ENCODE measurements at regions of chr15 and their contacts with region 1.

Region 1: GRCh38 chr15:51281368-51281967 is 56.9 kb downstream of the CYP19A1 start:
- DNase-seq: peak; percentile 78

Region 2: GRCh38 chr15:51229907-51230330 is 51.5 kb before region 1 on chr15:
- intact Hi-C with region 1: loop called (anchors 5 kb)
- DNase-seq: no peak

Region 3: GRCh38 chr15:51366960-51367648 is 85.6 kb after region 1 on chr15:
- intact Hi-C with region 1: no loop called
- DNase-seq: no peak

Region 4: DNA sequence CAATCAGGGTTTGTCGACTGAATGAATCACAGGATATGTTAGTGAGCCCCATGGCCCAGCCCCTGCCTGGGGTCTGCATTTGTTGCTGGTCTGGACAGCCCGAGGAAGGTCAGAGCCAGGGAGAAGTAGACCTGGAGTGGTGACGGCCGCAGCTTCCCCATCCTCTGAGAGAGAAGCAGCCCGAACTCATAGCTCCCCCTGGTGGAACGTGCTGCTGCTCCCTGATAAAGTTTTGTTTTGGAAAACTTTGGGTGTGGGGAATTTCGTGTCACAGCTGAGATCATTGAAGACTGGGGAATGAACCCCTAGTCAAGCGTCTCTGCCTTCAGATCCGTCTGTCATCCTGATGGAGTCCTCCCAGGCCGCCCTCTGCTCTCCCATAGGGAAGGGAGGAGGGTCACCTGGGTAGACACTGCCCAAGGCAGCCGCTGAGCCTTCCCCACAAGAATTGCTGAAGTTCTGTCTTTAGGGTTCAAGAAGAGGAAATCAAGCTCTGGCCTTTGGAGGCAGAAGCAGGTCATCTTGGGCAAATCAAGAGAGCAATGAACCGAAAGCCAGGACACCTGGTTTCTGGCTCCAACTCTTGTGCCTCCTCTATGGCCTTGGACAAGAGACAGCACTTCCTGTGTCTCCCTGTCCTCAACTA is 120.5 kb after region 1 on chr15:
- intact Hi-C with region 1: loop called (anchors 5 kb)
- DNase-seq: peak; percentile 84